CD8-positive, alpha-beta memory T cell (primary cell): ENCODE measurements at regions of chr22 and their contacts with region 1.

Region 1: GRCh38 chr22:37267135-37267587 is 15.1 kb upstream of the CYTH4 start:
- DNase-seq: peak; percentile 59 to 77 (median 71)
- H3K4me3 ChIP-seq: peak overlapping the region; percentile 85
- H3K4me3 Mint-ChIP-seq: peak overlapping the region; percentile 83 to 92 (median 88)
- H3K27ac ChIP-seq: peak overlapping the region; percentile 83
- H3K27ac Mint-ChIP-seq: peak overlapping the region; percentile 63 to 98 (median 92)
- H3K4me1 ChIP-seq: peaks cover 25% of the 10 kb centered on the region
- H3K4me1 Mint-ChIP-seq: peaks cover 21 to 33% (median 32%) of the 10 kb centered on the region in 3 donors
- H3K27me3 ChIP-seq: no peaks in the 10 kb centered on the region
- H3K27me3 Mint-ChIP-seq: no peaks in the 10 kb centered on the region

Region 2: GRCh38 chr22:37208406-37209139 is 58.6 kb before region 1 on chr22:
- CTCF ChIA-PET with region 1: no interaction called
- POLR2A ChIA-PET with region 1: no interaction called
- DNase-seq: peak in 1 of 5 donors; percentile 32
- H3K4me3 ChIP-seq: no peak overlapping the region
- H3K4me3 Mint-ChIP-seq: no peak overlapping the region
- H3K27ac ChIP-seq: no peak overlapping the region
- H3K27ac Mint-ChIP-seq: peak overlapping the region in 2 of 8 donors; percentile 34 to 68
- H3K4me1 ChIP-seq: peaks cover 26% of the 10 kb centered on the region
- H3K4me1 Mint-ChIP-seq: peaks cover 6 to 9% (median 6%) of the 10 kb centered on the region in 3 donors
- H3K27me3 ChIP-seq: no peaks in the 10 kb centered on the region
- H3K27me3 Mint-ChIP-seq: no peaks in the 10 kb centered on the region

Region 3: DNA sequence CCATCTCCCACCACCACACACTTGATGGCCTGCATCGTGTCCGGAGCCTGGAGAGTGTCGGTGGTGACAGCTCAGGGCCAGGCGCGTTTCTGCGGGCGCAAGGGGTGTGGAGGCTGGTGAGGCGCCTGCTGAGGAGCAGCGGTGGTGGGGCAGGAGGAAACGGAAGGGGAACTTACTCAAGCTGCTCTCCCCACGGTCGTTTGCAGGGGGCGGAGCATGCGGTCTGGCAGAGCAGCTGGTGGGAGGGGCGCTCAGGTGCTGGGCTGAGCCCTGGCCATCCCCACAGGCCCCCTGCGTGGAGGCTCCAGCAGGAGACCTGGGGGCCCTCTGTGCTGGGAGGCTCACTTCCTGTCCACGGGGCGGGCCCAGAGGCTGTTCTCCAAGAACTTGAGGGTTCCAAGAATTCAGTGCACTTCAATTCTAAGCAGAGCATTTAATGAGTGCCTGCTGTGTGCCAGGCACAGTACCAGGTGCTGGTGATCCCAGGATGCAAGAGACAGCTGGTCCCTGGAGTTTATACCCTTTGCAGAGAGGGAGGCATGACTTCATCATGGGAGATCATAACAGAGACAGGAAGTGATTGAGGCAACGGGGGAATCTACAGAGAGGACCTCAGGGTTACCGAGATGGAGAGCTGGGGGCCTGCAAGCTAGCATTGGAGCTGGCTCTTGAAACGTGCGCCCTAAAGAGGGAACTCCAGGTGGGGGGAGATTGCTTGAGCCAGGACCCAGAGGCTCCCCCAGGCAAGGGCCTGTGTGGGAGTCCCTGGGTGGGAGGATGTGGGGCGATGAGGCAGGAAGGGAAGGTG is 22.8 kb before region 1 on chr22 and contains the start of gene RAC2:
- CTCF ChIA-PET with region 1: interaction called, 233 read pairs
- POLR2A ChIA-PET with region 1: interaction called, 3 read pairs
- DNase-seq: peak; percentile 77 to 93 (median 83)
- H3K4me3 ChIP-seq: peak within 1 kb of the TSS; percentile 100
- H3K4me3 Mint-ChIP-seq: peak within 1 kb of the TSS; percentile 88 to 98 (median 93)
- H3K27ac ChIP-seq: peak within 1 kb of the TSS; percentile 91
- H3K27ac Mint-ChIP-seq: peak within 1 kb of the TSS; percentile 79 to 100 (median 98)
- H3K4me1 ChIP-seq: peaks cover 48% of the 10 kb centered on the region
- H3K4me1 Mint-ChIP-seq: peaks cover 49 to 58% (median 50%) of the 10 kb centered on the region in 3 donors
- H3K27me3 ChIP-seq: no peaks in the 10 kb centered on the region
- H3K27me3 Mint-ChIP-seq: no peaks in the 10 kb centered on the region
- total RNA-seq, gene RAC2: 433 to 452 TPM

Region 4: GRCh38 chr22:37282385-37282677 is 15.2 kb after region 1 on chr22 and contains the start of gene CYTH4:
- CTCF ChIA-PET with region 1: interaction called, 10 read pairs
- POLR2A ChIA-PET with region 1: interaction called, 5 read pairs
- DNase-seq: peak; percentile 63 to 83 (median 68)
- H3K4me3 ChIP-seq: peak within 1 kb of the TSS; percentile 89
- H3K4me3 Mint-ChIP-seq: peak within 1 kb of the TSS; percentile 89 to 98 (median 95)
- H3K27ac ChIP-seq: peak within 1 kb of the TSS; percentile 70
- H3K27ac Mint-ChIP-seq: peak within 1 kb of the TSS; percentile 86 to 100 (median 98)
- H3K4me1 ChIP-seq: peaks cover 26% of the 10 kb centered on the region
- H3K4me1 Mint-ChIP-seq: peaks cover 58 to 62% (median 62%) of the 10 kb centered on the region in 3 donors
- H3K27me3 ChIP-seq: no peaks in the 10 kb centered on the region
- H3K27me3 Mint-ChIP-seq: peaks cover 0 to 1% of the 10 kb centered on the region in 2 donors
- total RNA-seq, gene CYTH4: 23.1 to 24.7 TPM

Region 5: GRCh38 chr22:37309211-37310074 is 42.3 kb after region 1 on chr22:
- CTCF ChIA-PET with region 1: interaction called, 19 read pairs
- POLR2A ChIA-PET with region 1: no interaction called
- DNase-seq: peak; percentile 33 to 78 (median 65)
- H3K4me3 ChIP-seq: peak overlapping the region; percentile 51
- H3K4me3 Mint-ChIP-seq: peak overlapping the region; percentile 47 to 85 (median 75)
- H3K27ac ChIP-seq: peak overlapping the region; percentile 14
- H3K27ac Mint-ChIP-seq: peak overlapping the region; percentile 52 to 99 (median 88)
- H3K4me1 ChIP-seq: peaks cover 72% of the 10 kb centered on the region
- H3K4me1 Mint-ChIP-seq: peaks cover 66 to 89% (median 80%) of the 10 kb centered on the region in 3 donors
- H3K27me3 ChIP-seq: no peaks in the 10 kb centered on the region
- H3K27me3 Mint-ChIP-seq: no peaks in the 10 kb centered on the region

Region 6: GRCh38 chr22:37316875-37317371 is 49.8 kb after region 1 on chr22:
- CTCF ChIA-PET with region 1: interaction called, 19 read pairs
- POLR2A ChIA-PET with region 1: interaction called, 7 read pairs
- DNase-seq: peak; percentile 50 to 80 (median 61)
- H3K4me3 ChIP-seq: no peak overlapping the region
- H3K4me3 Mint-ChIP-seq: no peak overlapping the region
- H3K27ac ChIP-seq: no peak overlapping the region
- H3K27ac Mint-ChIP-seq: peak overlapping the region in 3 of 8 donors; percentile 13 to 37 (median 24)
- H3K4me1 ChIP-seq: peaks cover 28% of the 10 kb centered on the region
- H3K4me1 Mint-ChIP-seq: peaks cover 18 to 48% (median 30%) of the 10 kb centered on the region in 3 donors
- H3K27me3 ChIP-seq: no peaks in the 10 kb centered on the region
- H3K27me3 Mint-ChIP-seq: peaks cover 0 to 2% of the 10 kb centered on the region in 2 donors

Region 7: DNA sequence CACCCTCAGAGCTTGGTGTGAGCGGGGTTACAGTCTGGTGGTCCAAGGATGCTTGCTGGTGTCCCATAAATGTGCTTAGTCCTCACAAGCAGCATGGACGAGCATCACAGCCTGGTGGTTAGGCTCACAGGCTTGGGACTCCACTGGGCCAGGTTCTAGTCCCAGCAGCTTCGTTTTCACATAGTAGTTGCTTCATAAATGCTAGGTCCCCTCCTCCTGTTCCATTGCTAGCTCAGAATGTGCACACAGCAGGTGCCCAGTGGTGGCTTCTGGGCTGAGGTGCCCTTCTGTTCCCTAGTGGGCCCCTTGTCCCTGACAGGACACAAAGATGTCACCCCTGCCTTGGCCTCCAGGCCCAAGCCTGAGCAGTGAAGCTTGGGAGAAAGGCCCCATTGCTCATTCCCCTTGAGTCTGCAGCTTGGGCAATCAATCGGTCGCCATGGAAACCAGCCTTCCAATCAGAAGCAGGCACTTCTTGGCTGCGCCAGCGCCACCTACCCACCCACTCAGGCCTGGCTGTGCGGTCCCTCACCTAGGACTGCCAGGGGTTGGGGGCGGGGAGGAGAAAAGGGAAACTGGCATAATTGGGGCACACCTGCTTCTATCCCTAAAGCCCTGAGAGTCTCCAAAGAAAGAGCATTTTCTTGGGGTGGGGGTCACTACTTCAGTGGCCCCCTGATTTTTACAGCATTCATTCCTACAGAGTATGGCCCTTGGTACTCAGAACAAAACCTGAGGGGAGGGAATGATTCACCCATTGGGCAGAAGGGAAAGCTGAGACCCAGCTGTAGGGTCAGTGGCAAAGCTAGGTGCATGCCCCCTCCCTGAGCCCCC is 63.3 kb after region 1 on chr22:
- CTCF ChIA-PET with region 1: no interaction called
- POLR2A ChIA-PET with region 1: no interaction called
- DNase-seq: no peak
- H3K4me3 ChIP-seq: no peak overlapping the region
- H3K4me3 Mint-ChIP-seq: no peak overlapping the region
- H3K27ac ChIP-seq: no peak overlapping the region
- H3K27ac Mint-ChIP-seq: peak overlapping the region in 1 of 8 donors; percentile 41
- H3K4me1 ChIP-seq: no peaks in the 10 kb centered on the region
- H3K4me1 Mint-ChIP-seq: peaks cover 8 to 13% (median 9%) of the 10 kb centered on the region in 3 donors
- H3K27me3 ChIP-seq: peaks cover 38% of the 10 kb centered on the region
- H3K27me3 Mint-ChIP-seq: peaks cover 44 to 64% of the 10 kb centered on the region in 2 donors

Region 8: GRCh38 chr22:37428649-37429586 is 161.8 kb after region 1 on chr22:
- CTCF ChIA-PET with region 1: interaction called, 17 read pairs
- POLR2A ChIA-PET with region 1: no interaction called
- DNase-seq: peak; percentile 42 to 73 (median 51)
- H3K4me3 ChIP-seq: no peak overlapping the region
- H3K4me3 Mint-ChIP-seq: peak overlapping the region in 3 of 7 donors; percentile 6 to 55 (median 32)
- H3K27ac ChIP-seq: no peak overlapping the region
- H3K27ac Mint-ChIP-seq: peak overlapping the region in 1 of 8 donors; percentile 7
- H3K4me1 ChIP-seq: peaks cover 6% of the 10 kb centered on the region
- H3K4me1 Mint-ChIP-seq: peaks cover 3 to 22% (median 6%) of the 10 kb centered on the region in 3 donors
- H3K27me3 ChIP-seq: peaks cover 31% of the 10 kb centered on the region
- H3K27me3 Mint-ChIP-seq: peaks cover 61 to 78% of the 10 kb centered on the region in 2 donors

Region 9: GRCh38 chr22:37457093-37457893 is 190.1 kb after region 1 on chr22:
- CTCF ChIA-PET with region 1: interaction called, 21 read pairs
- POLR2A ChIA-PET with region 1: no interaction called
- DNase-seq: peak; percentile 64 to 86 (median 75)
- H3K4me3 ChIP-seq: no peak overlapping the region
- H3K4me3 Mint-ChIP-seq: no peak overlapping the region
- H3K27ac ChIP-seq: no peak overlapping the region
- H3K27ac Mint-ChIP-seq: no peak overlapping the region
- H3K4me1 ChIP-seq: no peaks in the 10 kb centered on the region
- H3K4me1 Mint-ChIP-seq: peaks cover 0 to 10% (median 4%) of the 10 kb centered on the region in 3 donors
- H3K27me3 ChIP-seq: no peaks in the 10 kb centered on the region
- H3K27me3 Mint-ChIP-seq: no peaks in the 10 kb centered on the region

Region 10: GRCh38 chr22:37472418-37473006 is 205.4 kb after region 1 on chr22:
- CTCF ChIA-PET with region 1: no interaction called
- POLR2A ChIA-PET with region 1: no interaction called
- DNase-seq: peak; percentile 30 to 66 (median 37)
- H3K4me3 ChIP-seq: no peak overlapping the region
- H3K4me3 Mint-ChIP-seq: no peak overlapping the region
- H3K27ac ChIP-seq: no peak overlapping the region
- H3K27ac Mint-ChIP-seq: peak overlapping the region in 6 of 8 donors; percentile 17 to 87 (median 54)
- H3K4me1 ChIP-seq: no peaks in the 10 kb centered on the region
- H3K4me1 Mint-ChIP-seq: peaks cover 8 to 16% (median 10%) of the 10 kb centered on the region in 3 donors
- H3K27me3 ChIP-seq: no peaks in the 10 kb centered on the region
- H3K27me3 Mint-ChIP-seq: no peaks in the 10 kb centered on the region